Ascending aorta (tissue), 2 donors: ENCODE measurements at regions of chr21 and their contacts with region 1.

Region 1: DNA sequence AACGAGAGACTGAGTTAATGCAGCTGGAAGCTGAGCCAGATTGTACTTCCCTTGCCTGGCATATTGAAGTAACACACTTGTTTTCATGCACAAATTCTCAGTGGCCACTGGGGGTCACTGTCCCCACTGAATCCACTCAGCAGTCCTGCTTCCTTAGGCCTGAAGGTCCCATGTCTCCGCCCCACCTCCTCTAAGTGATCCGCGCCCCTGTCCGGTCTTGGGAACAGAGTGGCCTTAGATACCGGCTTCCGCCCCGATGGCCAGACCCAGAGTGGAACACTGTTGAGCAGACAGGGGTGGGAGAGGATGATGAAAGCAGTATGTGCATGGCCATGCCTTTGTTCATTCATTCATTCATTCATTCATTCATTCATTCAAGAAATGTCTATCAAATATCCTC is 34.8 kb downstream of the CHAF1B start:
- DNase-seq: peak; percentile 21 to 84
- H3K4me3 ChIP-seq: no peak overlapping the region
- H3K27ac ChIP-seq: no peak overlapping the region
- H3K4me1 ChIP-seq: no peaks in the 10 kb centered on the region
- H3K27me3 ChIP-seq: no peaks in the 10 kb centered on the region
- CTCF ChIP-seq: peak; percentile 63 to 82 (median 79)

Region 2: GRCh38 chr21:36456729-36457414 is 36.9 kb after region 1 on chr21:
- intact Hi-C with region 1: loop called (anchors 2 kb)
- DNase-seq: no peak
- H3K4me3 ChIP-seq: no peak overlapping the region
- H3K27ac ChIP-seq: no peak overlapping the region
- H3K4me1 ChIP-seq: peaks cover 0 to 5% of the 10 kb centered on the region in 2 donors
- H3K27me3 ChIP-seq: no peaks in the 10 kb centered on the region
- CTCF ChIP-seq: no peak

Region 3: DNA sequence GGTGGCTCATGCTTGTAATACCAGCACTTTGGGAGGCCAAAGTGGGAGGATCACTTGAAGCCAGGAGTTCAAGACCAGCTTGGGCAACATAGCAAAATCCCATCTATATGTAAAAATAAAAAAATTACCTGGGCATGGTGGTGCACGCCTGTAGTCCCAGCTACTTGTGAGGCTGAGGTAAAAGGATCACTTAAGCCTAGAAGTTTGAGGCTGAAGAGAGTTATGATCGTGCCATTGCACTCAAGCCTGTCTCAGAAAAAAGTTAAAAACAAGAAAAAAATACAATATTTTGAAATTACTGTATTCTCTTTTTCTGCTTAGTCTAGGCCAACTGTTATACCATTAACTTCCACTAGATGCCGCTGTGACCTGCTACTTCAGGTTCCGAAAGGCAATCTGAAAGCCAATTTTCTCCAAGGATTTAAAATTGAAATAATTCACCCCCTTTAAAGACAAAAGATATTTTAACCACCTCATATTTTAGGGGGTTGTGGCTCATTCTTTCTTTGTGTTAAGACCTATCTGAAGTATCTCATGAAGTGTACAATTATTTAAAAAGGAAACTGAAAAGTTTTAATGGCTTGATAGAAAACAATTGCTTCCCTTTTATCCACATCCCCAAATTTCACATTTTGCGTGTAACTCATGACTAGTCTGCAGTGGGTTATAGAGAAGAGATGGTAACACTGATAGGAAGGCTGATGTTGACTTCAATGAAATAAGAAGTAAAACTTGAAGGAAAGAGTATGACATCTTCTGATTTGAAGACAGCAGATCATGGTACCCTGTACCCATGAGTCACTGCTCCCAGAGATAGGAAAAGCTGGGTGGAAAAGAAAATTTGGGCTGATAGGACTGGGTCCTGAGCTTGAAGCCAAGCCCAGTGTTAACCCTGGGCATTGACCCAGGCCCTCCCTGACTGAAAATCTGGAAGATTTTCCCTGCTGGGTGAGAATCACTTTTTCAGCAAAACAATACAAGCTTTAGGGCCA is 84.4 kb after region 1 on chr21:
- intact Hi-C with region 1: loop called (anchors 1 kb)
- DNase-seq: no peak
- H3K4me3 ChIP-seq: no peak overlapping the region
- H3K27ac ChIP-seq: no peak overlapping the region
- H3K4me1 ChIP-seq: no peaks in the 10 kb centered on the region
- H3K27me3 ChIP-seq: no peaks in the 10 kb centered on the region
- CTCF ChIP-seq: peak; percentile 80 to 90 (median 85)

Region 4: GRCh38 chr21:36927719-36928117 is 507.7 kb after region 1 on chr21:
- intact Hi-C with region 1: loop called (anchors 2 kb)
- DNase-seq: peak in 1 of 2 donors; percentile 82
- H3K4me3 ChIP-seq: no peak overlapping the region
- H3K27ac ChIP-seq: no peak overlapping the region
- H3K4me1 ChIP-seq: no peaks in the 10 kb centered on the region
- H3K27me3 ChIP-seq: no peaks in the 10 kb centered on the region
- CTCF ChIP-seq: peak; percentile 69 to 90 (median 86)